Calu3 (cell line): ENCODE measurements at regions of chr7 and their contacts with region 1.

Region 1: DNA sequence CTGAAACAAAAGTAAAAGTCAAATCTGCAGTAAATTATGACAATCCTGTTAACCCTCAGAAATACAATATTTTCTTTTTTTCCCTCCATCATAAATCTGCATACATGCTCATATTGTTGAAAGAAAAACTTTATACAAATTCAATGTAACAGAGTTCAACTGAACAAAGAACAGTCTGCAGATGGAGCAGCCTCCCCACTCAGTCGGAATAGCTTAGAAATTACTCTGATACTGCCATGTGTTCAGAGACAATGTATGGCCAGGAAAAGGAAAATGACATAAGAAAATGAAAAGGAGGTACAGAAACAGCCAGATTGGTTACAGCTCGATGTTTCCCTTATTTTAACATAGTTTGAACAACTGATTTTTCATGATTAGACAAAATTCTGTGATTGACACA is 651.9 kb upstream of the COBL start:
- DNase-seq: no peak
- H3K4me3 Mint-ChIP-seq: no peak overlapping the region
- H3K27ac Mint-ChIP-seq: no peak overlapping the region
- H3K4me1 Mint-ChIP-seq: no peaks in the 10 kb centered on the region
- H3K27me3 Mint-ChIP-seq: no peaks in the 10 kb centered on the region
- CTCF ChIP-seq: no peak

Region 2: DNA sequence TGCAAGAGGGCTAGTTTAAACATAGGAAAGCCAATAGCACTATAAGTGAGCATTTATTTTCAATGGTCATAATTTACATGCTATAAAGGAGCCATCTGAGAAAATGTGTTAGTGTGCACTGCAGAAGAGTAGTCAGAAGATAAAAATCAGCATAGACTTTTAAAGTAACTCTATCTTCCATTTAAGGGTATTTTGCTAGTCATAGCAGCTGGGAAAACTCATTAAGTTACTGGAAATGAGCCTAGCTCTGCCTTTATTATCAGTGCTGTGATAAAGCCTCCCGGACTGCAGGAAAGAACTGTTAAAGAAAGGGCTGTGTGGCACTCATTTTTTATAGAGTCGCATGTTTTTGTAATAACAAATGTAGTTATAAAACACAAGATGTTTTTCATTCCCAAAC is 241.2 kb after region 1 on chr7:
- CTCF ChIA-PET with region 1: no interaction called
- intact Hi-C with region 1: loop called (anchors 5 kb)
- DNase-seq: no peak
- H3K4me3 Mint-ChIP-seq: no peak overlapping the region
- H3K27ac Mint-ChIP-seq: no peak overlapping the region
- H3K4me1 Mint-ChIP-seq: no peaks in the 10 kb centered on the region
- H3K27me3 Mint-ChIP-seq: no peaks in the 10 kb centered on the region
- CTCF ChIP-seq: no peak